SK-N-SH (cell line): ENCODE measurements at regions of chr9 and their contacts with region 1.

Region 1: GRCh38 chr9:121399883-121400607 is 30.0 kb upstream of the STOM start:
- DNase-seq: peak; percentile 37
- H3K4me3 ChIP-seq: peak overlapping the region in 1 of 2 experiments; percentile 28; a peak in 1 of 4 replicates
- H3K27ac ChIP-seq: peak overlapping the region in 1 of 2 experiments; percentile 74; a peak in 1 of 4 replicates
- H3K4me1 ChIP-seq: peaks cover 0 to 20% of the 10 kb centered on the region in 2 experiments; a peak in 1 of 4 replicates
- H3K27me3 ChIP-seq: no peaks in the 10 kb centered on the region
- CTCF ChIP-seq: peak; percentile 74
- EP300 ChIP-seq: no peak
- RAD21 ChIP-seq: peak; percentile 89

Region 2: GRCh38 chr9:121313458-121314152 is 86.4 kb before region 1 on chr9:
- CTCF ChIA-PET with region 1: interaction called, 316 read pairs
- POLR2A ChIA-PET with region 1: no interaction called
- DNase-seq: no peak
- H3K4me3 ChIP-seq: no peak overlapping the region
- H3K27ac ChIP-seq: no peak overlapping the region
- H3K4me1 ChIP-seq: no peaks in the 10 kb centered on the region
- H3K27me3 ChIP-seq: no peaks in the 10 kb centered on the region
- CTCF ChIP-seq: no peak
- EP300 ChIP-seq: no peak
- RAD21 ChIP-seq: no peak

Region 3: GRCh38 chr9:121331992-121332685 is 67.9 kb before region 1 on chr9:
- CTCF ChIA-PET with region 1: interaction called, 15 read pairs
- POLR2A ChIA-PET with region 1: no interaction called
- DNase-seq: no peak
- H3K4me3 ChIP-seq: no peak overlapping the region
- H3K27ac ChIP-seq: no peak overlapping the region
- H3K4me1 ChIP-seq: peaks cover 0 to 10% of the 10 kb centered on the region in 2 experiments; a peak in 1 of 4 replicates
- H3K27me3 ChIP-seq: no peaks in the 10 kb centered on the region
- CTCF ChIP-seq: peak; percentile 47
- EP300 ChIP-seq: no peak
- RAD21 ChIP-seq: no peak

Region 4: DNA sequence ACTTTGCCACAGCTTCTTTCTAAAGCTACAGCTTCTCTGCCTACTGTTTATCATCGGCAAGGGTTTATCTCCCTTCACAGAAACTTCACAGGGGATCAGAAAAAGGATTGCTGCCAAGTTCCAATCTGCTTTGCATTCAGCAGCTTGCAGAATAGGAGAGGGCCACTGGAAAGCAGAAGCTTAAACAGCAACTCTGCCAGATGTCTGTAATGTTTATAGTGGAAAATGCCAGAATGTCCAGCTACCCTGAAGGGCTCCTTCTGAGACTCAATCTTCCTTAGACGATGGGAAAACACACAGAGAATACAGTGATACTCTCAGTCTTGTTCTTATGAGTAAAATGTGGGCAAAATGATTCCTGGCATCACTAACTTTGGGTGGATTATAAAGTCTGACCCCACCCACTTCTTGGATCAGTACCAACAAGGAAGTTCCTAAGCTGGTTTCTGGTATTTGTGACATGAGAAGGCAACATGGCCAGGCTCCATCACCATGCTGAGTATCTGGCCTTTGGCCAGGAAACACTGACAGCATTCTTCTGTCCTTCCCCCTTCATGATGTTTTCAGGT is 49.0 kb before region 1 on chr9:
- CTCF ChIA-PET with region 1: interaction called, 19 read pairs
- POLR2A ChIA-PET with region 1: no interaction called
- DNase-seq: peak; percentile 49
- H3K4me3 ChIP-seq: no peak overlapping the region
- H3K27ac ChIP-seq: peak overlapping the region; percentile 83 to 91
- H3K4me1 ChIP-seq: peaks cover 21 to 27% of the 10 kb centered on the region in 2 experiments; a peak in 3 of 4 replicates
- H3K27me3 ChIP-seq: no peaks in the 10 kb centered on the region
- CTCF ChIP-seq: no peak
- EP300 ChIP-seq: peak; percentile 10 to 14; a peak in 1 of 4 replicates
- RAD21 ChIP-seq: no peak

Region 5: DNA sequence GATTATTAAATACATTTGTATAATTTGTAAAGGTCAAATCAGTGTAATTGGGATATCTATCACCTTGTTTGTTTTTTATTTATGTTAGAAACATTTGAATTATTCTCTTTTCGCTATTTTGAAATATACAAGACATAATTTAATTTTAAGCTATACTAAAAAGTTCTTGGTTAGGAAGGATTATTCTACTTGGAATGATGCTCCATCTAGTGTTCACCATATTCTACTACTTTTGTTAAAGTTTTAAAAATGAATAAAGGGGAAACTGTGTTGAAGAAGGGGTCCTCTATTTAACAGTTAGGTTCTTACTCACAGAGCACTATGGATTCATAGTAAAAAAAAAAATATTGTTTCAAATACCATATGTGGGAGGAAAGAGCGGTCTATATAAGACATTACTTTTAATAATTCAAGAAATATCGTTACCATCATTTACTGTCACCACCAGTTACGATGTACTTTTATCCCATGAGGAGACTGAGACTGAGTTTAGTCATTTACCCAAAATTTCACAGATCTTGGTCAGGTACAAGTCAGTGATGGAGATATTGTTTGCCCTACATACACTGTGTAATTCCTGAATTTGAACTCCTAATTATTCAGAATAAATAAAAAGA is 23.7 kb before region 1 on chr9:
- CTCF ChIA-PET with region 1: interaction called, 44 read pairs
- POLR2A ChIA-PET with region 1: no interaction called
- DNase-seq: peak; percentile 29
- H3K4me3 ChIP-seq: no peak overlapping the region; a peak in 1 of 4 replicates
- H3K27ac ChIP-seq: no peak overlapping the region
- H3K4me1 ChIP-seq: peaks cover 14 to 20% of the 10 kb centered on the region in 2 experiments; a peak in 3 of 4 replicates
- H3K27me3 ChIP-seq: no peaks in the 10 kb centered on the region
- CTCF ChIP-seq: peak; percentile 71
- EP300 ChIP-seq: no peak
- RAD21 ChIP-seq: peak; percentile 58